Colonic mucosa (tissue), 4 donors: ENCODE measurements at regions of chr13 and their contacts with region 1.

Region 1: GRCh38 chr13:99442273-99442895 is 58.9 kb upstream of the TM9SF2 start:
- DNase-seq: peak; percentile 57
- H3K4me3 ChIP-seq: no peak overlapping the region
- H3K27ac ChIP-seq: no peak overlapping the region
- H3K4me1 ChIP-seq: no peaks in the 10 kb centered on the region
- H3K27me3 ChIP-seq: no peaks in the 10 kb centered on the region
- CTCF ChIP-seq: peak; percentile 98

Region 2: DNA sequence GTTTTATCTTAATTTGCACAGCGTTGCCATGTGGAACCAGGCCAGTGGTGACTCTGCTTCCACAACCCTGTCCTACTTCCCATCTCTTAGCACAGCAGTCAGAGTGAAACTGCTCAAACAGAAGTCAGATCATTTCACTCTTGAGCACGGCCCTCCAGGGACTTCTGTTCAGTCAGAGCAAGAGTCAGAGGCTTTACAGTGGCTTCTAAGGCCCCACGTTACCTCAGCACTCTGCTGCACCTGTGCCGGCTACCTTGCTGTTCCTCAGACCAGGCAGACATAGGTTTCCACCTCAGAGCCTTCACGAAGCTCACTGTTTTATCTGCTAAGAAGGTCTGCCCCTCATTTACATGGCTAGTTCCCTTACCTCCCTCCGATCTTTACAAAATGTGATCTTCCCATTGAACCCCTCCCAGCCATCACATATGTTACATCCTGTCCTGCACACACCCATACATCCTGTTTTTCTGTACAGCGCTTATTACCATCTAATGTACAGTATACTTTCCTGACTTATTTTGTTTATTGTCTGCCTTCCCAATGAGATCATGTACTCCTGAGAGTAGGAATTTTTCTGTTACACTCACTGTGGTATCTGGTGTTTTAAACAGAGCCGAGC is 100.5 kb after region 1 on chr13:
- intact Hi-C with region 1: loop called (anchors 10 kb)
- DNase-seq: no peak
- H3K4me3 ChIP-seq: no peak overlapping the region
- H3K27ac ChIP-seq: no peak overlapping the region
- H3K4me1 ChIP-seq: no peaks in the 10 kb centered on the region
- H3K27me3 ChIP-seq: no peaks in the 10 kb centered on the region
- CTCF ChIP-seq: no peak

Region 3: DNA sequence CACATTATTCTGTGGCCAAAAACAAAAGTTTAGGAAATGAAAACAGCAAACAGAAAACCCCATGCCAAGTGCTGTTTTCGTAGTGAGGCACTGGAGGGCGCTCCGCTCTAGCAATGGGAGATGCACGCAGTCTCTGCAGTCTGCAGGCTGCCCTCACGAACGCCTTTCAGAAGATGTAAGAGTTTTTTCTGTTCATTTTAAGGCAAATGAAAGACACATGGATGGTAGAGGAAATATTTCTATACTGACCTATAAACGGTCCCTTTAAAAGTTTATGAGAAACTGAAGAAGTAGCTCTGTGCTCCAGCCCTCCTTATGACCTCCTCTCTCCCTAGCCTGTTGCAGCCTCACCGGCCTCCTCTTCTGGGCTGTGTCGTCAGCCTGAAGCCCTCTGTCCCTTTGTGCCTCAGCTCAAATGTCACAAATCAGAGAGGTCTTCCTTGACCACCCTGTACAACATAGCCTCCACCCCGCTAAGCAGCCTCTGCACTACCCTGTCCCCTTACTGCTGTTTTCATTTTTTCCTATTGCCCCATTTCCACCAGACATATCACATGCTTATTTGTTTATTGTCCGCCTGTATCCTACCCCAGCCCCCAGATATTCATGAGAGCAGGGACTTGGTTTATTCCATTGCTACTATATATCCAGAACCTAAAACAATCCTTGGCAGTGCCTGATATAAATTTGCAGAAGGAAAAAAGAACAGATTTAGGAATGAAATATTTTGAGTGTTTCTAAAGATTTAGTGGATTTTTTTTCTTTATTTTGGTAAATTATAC is 175.3 kb after region 1 on chr13:
- intact Hi-C with region 1: loop called (anchors 10 kb)
- DNase-seq: peak; percentile 50
- H3K4me3 ChIP-seq: no peak overlapping the region
- H3K27ac ChIP-seq: no peak overlapping the region
- H3K4me1 ChIP-seq: no peaks in the 10 kb centered on the region
- H3K27me3 ChIP-seq: no peaks in the 10 kb centered on the region
- CTCF ChIP-seq: peak; percentile 33